Activated B cell treated with CpG ODN at 0.5 μM for 24 hours (primary cell): ENCODE measurements at regions of chr4 and their contacts with region 1.

Region 1: GRCh38 chr4:75724066-75724866 is at the start of gene USO1:
- DNase-seq: peak; percentile 99
- ATAC-seq: peak; percentile 95
- H3K4me3 Mint-ChIP-seq: peak within 1 kb of the TSS; percentile 100
- H3K27ac Mint-ChIP-seq: peak within 1 kb of the TSS; percentile 99
- H3K4me1 Mint-ChIP-seq: peaks cover 52% of the 10 kb centered on the region
- H3K27me3 Mint-ChIP-seq: no peaks in the 10 kb centered on the region
- CTCF ChIP-seq: peak; percentile 23
- total RNA-seq, gene USO1: 41.3 and 41.7 TPM in 2 replicates

Region 2: DNA sequence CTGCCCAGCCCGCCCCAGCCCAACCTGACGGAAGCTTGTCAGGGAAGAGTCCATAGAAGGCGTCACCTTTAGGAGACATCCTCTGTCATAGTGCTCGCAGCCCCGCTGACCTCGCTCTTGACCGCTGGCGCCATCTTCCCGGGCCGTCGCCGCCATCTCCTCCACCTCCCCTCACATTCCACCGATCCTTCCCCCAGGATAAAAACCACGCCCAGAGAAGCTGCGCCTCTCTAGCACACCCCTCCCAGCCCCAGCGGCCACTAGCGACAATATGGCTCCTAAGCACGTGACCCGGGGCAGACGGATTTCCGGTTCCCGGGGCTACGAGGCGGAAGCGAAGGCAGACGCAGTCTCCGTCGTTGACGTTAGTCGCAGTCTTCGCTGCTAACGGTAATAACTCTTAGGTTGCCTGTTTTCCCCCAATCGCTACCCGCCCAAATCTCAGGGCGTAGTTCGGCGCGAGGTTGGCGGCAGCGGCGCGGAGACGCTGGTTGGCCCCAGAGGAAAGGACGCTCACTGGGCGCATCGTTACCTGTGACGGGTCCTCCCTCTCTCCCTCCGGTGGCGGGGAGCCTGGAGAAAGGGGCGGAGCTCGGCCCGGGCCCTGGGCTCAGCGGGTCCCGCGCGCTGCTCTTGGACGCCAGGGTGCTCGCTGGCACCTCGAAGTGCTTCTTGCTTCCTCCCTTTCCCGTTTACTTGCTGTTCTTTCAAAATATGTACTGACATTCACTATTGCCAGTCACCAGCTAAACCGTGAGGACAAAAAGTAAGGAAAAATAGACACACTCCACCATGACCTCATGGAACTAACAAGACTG is 209.9 kb before region 1 on chr4 and contains the starts of genes RCHY1 and THAP6:
- CTCF ChIA-PET with region 1: interaction called, 4 read pairs
- POLR2A ChIA-PET with region 1: interaction called, 22 read pairs
- intact Hi-C with region 1: loop called (anchors 1 kb)
- DNase-seq: peak; percentile 88
- ATAC-seq: peak; percentile 87
- H3K4me3 Mint-ChIP-seq: no peak within 1 kb of the TSS
- H3K27ac Mint-ChIP-seq: peak within 1 kb of the TSS; percentile 95
- H3K4me1 Mint-ChIP-seq: peaks cover 39% of the 10 kb centered on the region
- H3K27me3 Mint-ChIP-seq: no peaks in the 10 kb centered on the region
- CTCF ChIP-seq: no peak
- total RNA-seq, gene RCHY1: 28.5 and 29.6 TPM in 2 replicates
- total RNA-seq, gene THAP6: 17.4 and 24.6 TPM in 2 replicates

Region 3: GRCh38 chr4:75630174-75630936 is 93.9 kb before region 1 on chr4 and contains the start of gene CDKL2:
- CTCF ChIA-PET with region 1: no interaction called
- POLR2A ChIA-PET with region 1: interaction called, 8 read pairs
- intact Hi-C with region 1: loop called (anchors 1 kb)
- DNase-seq: peak; percentile 83
- ATAC-seq: peak; percentile 100
- H3K4me3 Mint-ChIP-seq: peak within 1 kb of the TSS; percentile 87
- H3K27ac Mint-ChIP-seq: peak within 1 kb of the TSS; percentile 50
- H3K4me1 Mint-ChIP-seq: peaks cover 8% of the 10 kb centered on the region
- H3K27me3 Mint-ChIP-seq: no peaks in the 10 kb centered on the region
- CTCF ChIP-seq: no peak
- total RNA-seq, gene CDKL2: not detected in 2 replicates

Region 4: DNA sequence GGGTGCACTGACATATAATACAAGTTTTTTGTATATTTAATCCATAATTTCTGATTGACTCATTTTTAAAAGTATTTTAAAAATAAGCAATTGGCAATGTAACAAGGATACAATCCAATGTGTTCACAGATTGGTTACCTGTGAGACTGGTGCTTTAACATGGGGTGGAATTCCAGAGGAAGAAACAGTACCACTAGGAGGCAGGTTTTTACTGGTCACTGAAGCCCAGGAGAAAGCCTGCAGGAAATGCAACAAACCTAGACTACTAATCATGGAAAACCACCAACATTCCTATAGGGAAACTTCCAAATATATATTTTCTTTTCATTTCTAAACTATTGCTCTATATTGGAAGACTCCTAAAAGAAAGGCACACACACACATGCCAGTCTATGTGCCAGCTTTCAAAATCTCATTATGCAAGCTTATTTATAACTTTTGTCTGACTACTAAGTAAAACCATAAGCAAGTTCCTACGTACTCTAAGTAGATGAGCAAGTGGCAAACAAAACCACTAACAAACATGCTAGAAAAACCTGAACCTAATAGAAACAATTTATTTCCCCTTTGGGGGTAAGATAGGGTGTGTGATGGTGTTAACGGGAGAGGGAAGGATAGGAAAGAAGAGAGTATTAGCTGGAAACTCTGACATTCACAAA is 70.3 kb before region 1 on chr4:
- CTCF ChIA-PET with region 1: interaction called, 9 read pairs
- POLR2A ChIA-PET with region 1: interaction called, 9 read pairs
- intact Hi-C with region 1: loop called (anchors 1 kb)
- DNase-seq: no peak
- ATAC-seq: no peak
- H3K4me3 Mint-ChIP-seq: no peak overlapping the region
- H3K27ac Mint-ChIP-seq: no peak overlapping the region
- H3K4me1 Mint-ChIP-seq: peaks cover 31% of the 10 kb centered on the region
- H3K27me3 Mint-ChIP-seq: no peaks in the 10 kb centered on the region
- CTCF ChIP-seq: no peak

Region 5: GRCh38 chr4:75698162-75698962 is 25.9 kb before region 1 on chr4:
- CTCF ChIA-PET with region 1: interaction called, 7 read pairs
- POLR2A ChIA-PET with region 1: interaction called, 25 read pairs
- intact Hi-C with region 1: loop called (anchors 1 kb)
- DNase-seq: peak; percentile 21
- ATAC-seq: peak; percentile 96
- H3K4me3 Mint-ChIP-seq: peak overlapping the region; percentile 44
- H3K27ac Mint-ChIP-seq: peak overlapping the region; percentile 90
- H3K4me1 Mint-ChIP-seq: peaks cover 38% of the 10 kb centered on the region
- H3K27me3 Mint-ChIP-seq: no peaks in the 10 kb centered on the region
- CTCF ChIP-seq: no peak

Region 6: GRCh38 chr4:75989846-75990528 is 265.7 kb after region 1 on chr4:
- CTCF ChIA-PET with region 1: no interaction called
- POLR2A ChIA-PET with region 1: interaction called, 3 read pairs
- intact Hi-C with region 1: loop called (anchors 2 kb)
- DNase-seq: no peak
- ATAC-seq: no peak
- H3K4me3 Mint-ChIP-seq: peak overlapping the region; percentile 95
- H3K27ac Mint-ChIP-seq: peak overlapping the region; percentile 86
- H3K4me1 Mint-ChIP-seq: peaks cover 34% of the 10 kb centered on the region
- H3K27me3 Mint-ChIP-seq: peaks cover 2% of the 10 kb centered on the region
- CTCF ChIP-seq: no peak